Transverse colon (tissue), 4 donors: ENCODE measurements at regions of chr14 and their contacts with region 1.

Region 1: GRCh38 chr14:89416002-89416995 is 734 bp downstream of the FOXN3 start:
- DNase-seq: peak; percentile 100
- H3K4me3 ChIP-seq: peak overlapping the region; percentile 65 to 99 (median 82)
- H3K27ac ChIP-seq: peak overlapping the region; percentile 98 to 99 (median 98)
- H3K4me1 ChIP-seq: peaks cover 16 to 52% (median 30%) of the 10 kb centered on the region in 4 donors
- H3K27me3 ChIP-seq: no peaks in the 10 kb centered on the region
- CTCF ChIP-seq: no peak
- EP300 ChIP-seq: no peak
- POLR2A ChIP-seq: peak; percentile 58

Region 2: DNA sequence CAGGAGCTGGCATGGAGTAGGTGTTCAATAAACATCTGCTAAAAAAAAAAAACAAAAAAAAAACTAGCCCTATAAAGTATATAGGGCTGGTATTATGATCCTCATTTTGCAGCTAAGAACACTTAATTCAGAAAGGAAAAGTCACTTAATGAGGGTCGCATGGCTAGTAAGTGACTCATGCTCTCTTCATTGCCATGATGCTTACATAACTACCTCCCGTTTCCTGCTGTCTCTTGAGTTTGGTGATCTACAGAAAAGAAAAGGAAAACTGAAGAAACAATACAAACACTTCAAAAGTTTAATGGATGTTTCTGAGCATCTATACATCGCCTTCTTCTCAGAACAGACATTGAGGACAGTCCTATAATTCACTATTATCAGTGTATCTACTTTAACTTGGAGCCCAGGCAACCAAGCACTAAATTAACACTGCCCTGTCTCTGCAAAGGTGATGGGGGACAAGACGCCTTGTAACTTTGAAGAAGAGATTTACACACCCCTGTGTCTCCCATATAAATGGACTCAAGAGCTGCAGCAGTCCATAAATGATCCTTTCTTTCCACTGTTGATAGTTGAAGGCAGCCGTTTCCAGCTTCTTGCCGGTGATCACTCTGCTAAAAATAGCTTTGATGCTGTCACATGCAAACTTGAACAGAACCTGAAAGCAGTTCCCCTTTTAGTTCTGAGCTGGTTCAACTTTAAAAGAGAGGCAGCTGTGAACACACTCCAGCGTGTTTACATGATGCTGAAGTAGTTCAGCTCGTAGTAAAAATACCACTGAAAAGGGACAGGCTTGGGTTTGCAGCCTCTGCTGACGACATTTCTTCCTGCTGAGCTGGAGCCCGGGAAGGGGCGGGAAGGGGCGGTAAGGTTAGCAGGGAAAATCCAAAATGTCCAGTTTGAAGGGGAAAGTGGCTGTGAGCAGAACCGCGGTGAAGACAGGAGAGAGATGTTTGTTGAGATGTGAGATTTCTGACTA is 112.6 kb before region 1 on chr14:
- in situ Hi-C with region 1: no loop called
- intact Hi-C with region 1: loop called (anchors 2 kb)
- DNase-seq: peak; percentile 64
- H3K4me3 ChIP-seq: no peak overlapping the region
- H3K27ac ChIP-seq: peak overlapping the region; percentile 87 to 93 (median 91)
- H3K4me1 ChIP-seq: peaks cover 17 to 38% (median 28%) of the 10 kb centered on the region in 4 donors
- H3K27me3 ChIP-seq: no peaks in the 10 kb centered on the region
- CTCF ChIP-seq: no peak
- EP300 ChIP-seq: peak; percentile 76
- POLR2A ChIP-seq: peak; percentile 36

Region 3: DNA sequence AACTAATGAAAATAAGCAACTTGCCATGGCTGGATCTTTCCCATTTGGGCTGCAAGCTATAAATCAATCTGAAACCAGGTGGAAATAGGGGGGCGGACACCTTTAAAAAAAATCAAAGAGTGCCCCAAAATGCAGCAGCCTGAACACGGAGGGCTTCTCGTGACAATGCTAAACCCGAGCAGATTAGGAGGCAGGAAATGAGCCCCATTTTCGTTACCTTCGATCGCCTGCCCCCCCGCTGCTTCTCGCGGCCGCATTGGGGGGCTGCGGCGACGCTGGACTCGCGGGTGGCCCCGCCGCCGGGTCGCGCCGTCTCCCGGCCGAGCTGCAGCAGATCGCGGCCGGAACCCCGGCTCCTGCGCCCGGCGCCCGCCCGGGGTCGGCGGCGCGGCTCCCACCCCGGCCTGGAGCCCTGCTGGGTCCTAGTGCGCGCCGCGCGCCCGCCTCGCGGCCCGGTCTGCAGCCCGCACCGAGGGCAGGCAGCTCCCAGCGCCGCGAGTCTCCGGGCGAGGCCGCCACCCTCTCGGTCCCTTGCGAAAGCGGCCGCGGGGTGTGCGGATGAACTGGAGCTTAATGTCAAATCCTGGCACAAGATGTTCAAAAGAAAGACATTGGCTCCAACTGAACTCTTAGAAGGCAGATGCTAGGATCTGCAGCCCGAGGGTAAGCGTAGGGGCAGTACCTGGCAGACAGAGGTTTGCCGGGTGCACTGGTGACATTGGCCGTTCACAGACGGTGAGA is 202.7 kb after region 1 on chr14:
- in situ Hi-C with region 1: no loop called
- intact Hi-C with region 1: loop called (anchors 10 kb)
- DNase-seq: peak; percentile 76
- H3K4me3 ChIP-seq: peak overlapping the region; percentile 70 to 93 (median 78)
- H3K27ac ChIP-seq: peak overlapping the region; percentile 77 to 88 (median 85)
- H3K4me1 ChIP-seq: peaks cover 0 to 41% (median 12%) of the 10 kb centered on the region in 4 donors
- H3K27me3 ChIP-seq: no peaks in the 10 kb centered on the region
- CTCF ChIP-seq: no peak
- EP300 ChIP-seq: no peak
- POLR2A ChIP-seq: no peak